ENCODE measurements at regions of chr18 and their contacts with region 1.

Region 1: GRCh38 chr18:267688-268552 is at the start of gene THOC1:
- DNase-seq: peak; percentile 92
- H3K4me3 Mint-ChIP-seq: peak within 1 kb of the TSS; percentile 93
- H3K27ac Mint-ChIP-seq: peak within 1 kb of the TSS; percentile 98
- H3K4me1 Mint-ChIP-seq: peaks cover 30% of the 10 kb centered on the region
- H3K27me3 Mint-ChIP-seq: no peaks in the 10 kb centered on the region
- total RNA-seq, gene THOC1: 69.9 and 76.8 TPM in 2 replicates

Region 2: GRCh38 chr18:183769-184168 is 84.2 kb before region 1 on chr18:
- intact Hi-C with region 1: no loop called
- DNase-seq: no peak
- H3K4me3 Mint-ChIP-seq: no peak overlapping the region
- H3K27ac Mint-ChIP-seq: no peak overlapping the region
- H3K4me1 Mint-ChIP-seq: peaks cover 24% of the 10 kb centered on the region
- H3K27me3 Mint-ChIP-seq: no peaks in the 10 kb centered on the region

Region 3: GRCh38 chr18:250688-251422 is 17.1 kb before region 1 on chr18:
- intact Hi-C with region 1: loop called (anchors 2 kb)
- DNase-seq: no peak
- H3K4me3 Mint-ChIP-seq: no peak overlapping the region
- H3K27ac Mint-ChIP-seq: no peak overlapping the region
- H3K4me1 Mint-ChIP-seq: no peaks in the 10 kb centered on the region
- H3K27me3 Mint-ChIP-seq: no peaks in the 10 kb centered on the region

Region 4: DNA sequence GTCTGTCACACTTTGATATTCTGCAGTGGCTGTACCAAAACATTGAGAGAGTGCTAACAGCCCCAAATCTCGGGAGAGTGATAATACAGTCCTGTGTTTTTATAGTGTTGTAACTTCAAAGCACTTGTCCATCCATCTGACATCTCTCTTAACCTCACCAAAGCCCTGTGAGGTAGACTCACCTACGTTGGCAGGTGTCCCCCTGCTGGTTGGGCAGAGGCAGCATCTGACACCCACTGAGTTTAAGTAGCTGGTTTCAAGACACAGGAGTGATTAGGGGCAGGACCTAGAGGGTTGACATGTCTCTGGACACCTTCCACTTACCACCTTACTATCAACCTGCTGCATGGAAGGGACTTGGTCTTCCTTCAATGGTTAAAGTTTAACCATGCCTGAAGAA is 209.6 kb after region 1 on chr18:
- intact Hi-C with region 1: loop called (anchors 5 kb)
- DNase-seq: no peak
- H3K4me3 Mint-ChIP-seq: no peak overlapping the region
- H3K27ac Mint-ChIP-seq: no peak overlapping the region
- H3K4me1 Mint-ChIP-seq: no peaks in the 10 kb centered on the region
- H3K27me3 Mint-ChIP-seq: peaks cover 5% of the 10 kb centered on the region

Region 5: DNA sequence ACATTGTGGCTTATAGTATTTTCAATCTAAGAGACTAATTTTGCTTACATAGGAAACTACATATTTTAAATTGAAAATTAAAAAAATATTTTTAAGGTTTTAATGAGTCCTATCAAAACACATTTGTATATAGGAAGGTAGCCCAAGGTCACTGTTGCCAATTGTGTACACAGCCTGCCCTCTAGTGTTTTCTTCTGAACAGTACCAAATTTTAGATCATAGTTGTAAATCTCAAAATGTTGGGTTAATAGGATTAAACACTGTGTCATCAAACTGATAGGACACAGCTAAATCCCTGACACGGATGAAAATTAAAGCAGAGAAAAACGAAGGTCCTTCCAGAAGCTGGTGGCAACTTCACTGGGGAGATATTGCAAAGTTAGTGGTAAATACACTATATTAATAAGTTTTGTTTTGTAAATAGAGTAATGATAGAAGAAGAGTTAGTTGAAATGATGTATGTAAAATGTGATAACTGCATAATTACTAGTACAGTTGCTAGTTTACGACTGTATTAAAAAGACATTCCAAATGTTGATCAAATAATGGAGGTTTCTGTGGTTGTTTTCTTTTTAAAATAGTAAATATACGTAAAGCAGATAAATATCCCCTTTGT is 348.6 kb after region 1 on chr18:
- intact Hi-C with region 1: loop called (anchors 2 kb)
- DNase-seq: no peak
- H3K4me3 Mint-ChIP-seq: no peak overlapping the region
- H3K27ac Mint-ChIP-seq: no peak overlapping the region
- H3K4me1 Mint-ChIP-seq: no peaks in the 10 kb centered on the region
- H3K27me3 Mint-ChIP-seq: peaks cover 11% of the 10 kb centered on the region

Region 6: DNA sequence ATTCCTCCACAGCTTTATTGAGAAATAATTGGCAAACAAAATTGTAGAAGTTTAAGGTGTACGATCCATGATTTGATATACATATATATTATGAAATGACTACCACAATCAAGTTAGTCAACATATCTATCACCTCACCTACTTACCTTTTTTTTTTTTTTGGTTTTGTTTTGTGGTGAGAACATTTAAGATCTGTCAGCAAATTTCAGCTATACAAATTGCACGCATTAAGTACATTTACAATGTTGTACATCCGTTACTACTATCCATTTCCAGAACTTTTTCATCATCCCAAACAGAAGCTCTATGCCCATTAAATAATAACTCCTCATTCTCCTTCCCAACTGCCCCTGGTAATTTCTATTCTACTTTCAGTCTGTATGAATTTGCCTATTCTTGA is 599.3 kb after region 1 on chr18:
- intact Hi-C with region 1: no loop called
- DNase-seq: no peak
- H3K4me3 Mint-ChIP-seq: no peak overlapping the region
- H3K27ac Mint-ChIP-seq: no peak overlapping the region
- H3K4me1 Mint-ChIP-seq: peaks cover 5% of the 10 kb centered on the region
- H3K27me3 Mint-ChIP-seq: peaks cover 34% of the 10 kb centered on the region

Measured in activated T-helper 1 cell treated with anti-CD3 and anti-CD28 coated beads, Interleukin-12 subunit alpha, Interleukin-12 subunit beta, Interleukin-2, Interleukin-4 antibody, amounts not matched to agents 30 ng/mL and 10 ng/mL and 1 ng/mL, durations not matched to agents 14 hours and 24 hours and 36 hours (primary cell).